GM10248 (cell line): ENCODE measurements at regions of chr12 and their contacts with region 1.

Region 1: GRCh38 chr12:11746024-11746771 is 96.7 kb downstream of the ETV6 start:
- DNase-seq: no peak
- CTCF ChIP-seq: no peak

Region 2: GRCh38 chr12:11595080-11595479 is 151.1 kb before region 1 on chr12:
- CTCF ChIA-PET with region 1: no interaction called
- POLR2A ChIA-PET with region 1: no interaction called
- DNase-seq: no peak
- CTCF ChIP-seq: no peak

Region 3: DNA sequence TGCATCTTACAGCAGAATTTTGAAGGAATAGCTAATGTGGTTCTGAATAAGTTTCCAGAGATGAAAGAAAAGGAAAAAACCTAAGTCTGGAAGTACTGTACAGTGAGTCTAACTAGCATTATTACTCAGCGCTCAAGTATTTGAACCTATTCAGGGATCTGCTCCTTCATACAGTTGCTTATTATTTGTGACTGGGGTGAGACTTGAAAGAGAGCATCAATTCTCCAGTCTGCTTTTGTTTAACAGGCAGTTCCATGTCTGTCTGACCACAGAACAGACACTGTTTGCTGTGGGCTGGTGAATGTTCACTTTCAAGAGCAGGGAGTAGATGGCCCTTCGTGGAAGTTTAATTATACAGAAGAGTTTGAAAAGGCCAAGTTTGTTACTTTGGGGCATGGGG is 87.4 kb before region 1 on chr12:
- CTCF ChIA-PET with region 1: no interaction called
- POLR2A ChIA-PET with region 1: no interaction called
- DNase-seq: no peak
- CTCF ChIP-seq: no peak

Region 4: GRCh38 chr12:11758510-11759493 is 12.6 kb after region 1 on chr12:
- CTCF ChIA-PET with region 1: interaction called, 40 read pairs
- POLR2A ChIA-PET with region 1: interaction called, 6 read pairs
- DNase-seq: peak; percentile 35
- CTCF ChIP-seq: no peak